ENCODE measurements at regions of chr3 and their contacts with region 1.

Region 1: DNA sequence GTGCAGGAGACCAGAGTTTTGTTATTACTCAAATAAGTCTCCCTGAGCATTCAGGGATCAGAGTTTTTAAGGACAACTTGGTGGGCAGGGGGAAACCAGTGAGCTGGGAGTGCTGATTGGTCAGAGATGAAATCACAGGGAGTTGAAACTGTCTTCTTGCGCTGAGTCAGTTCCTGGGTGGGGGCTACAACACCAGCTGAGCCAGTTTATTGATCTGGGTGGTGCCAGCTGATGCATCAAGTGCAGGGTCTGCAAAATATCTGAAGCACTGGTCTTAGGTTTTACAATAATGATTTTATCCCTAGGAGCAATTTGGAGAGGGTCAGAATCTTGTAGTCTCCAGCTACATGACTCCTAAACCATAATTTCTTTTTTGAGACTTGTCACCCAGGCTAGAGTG is 13.8 kb upstream of the ZNF662 start:
- DNase-seq: no peak
- H3K4me3 ChIP-seq: no peak overlapping the region
- H3K27me3 ChIP-seq: peaks cover 2% of the 10 kb centered on the region
- CTCF ChIP-seq: no peak

Region 2: DNA sequence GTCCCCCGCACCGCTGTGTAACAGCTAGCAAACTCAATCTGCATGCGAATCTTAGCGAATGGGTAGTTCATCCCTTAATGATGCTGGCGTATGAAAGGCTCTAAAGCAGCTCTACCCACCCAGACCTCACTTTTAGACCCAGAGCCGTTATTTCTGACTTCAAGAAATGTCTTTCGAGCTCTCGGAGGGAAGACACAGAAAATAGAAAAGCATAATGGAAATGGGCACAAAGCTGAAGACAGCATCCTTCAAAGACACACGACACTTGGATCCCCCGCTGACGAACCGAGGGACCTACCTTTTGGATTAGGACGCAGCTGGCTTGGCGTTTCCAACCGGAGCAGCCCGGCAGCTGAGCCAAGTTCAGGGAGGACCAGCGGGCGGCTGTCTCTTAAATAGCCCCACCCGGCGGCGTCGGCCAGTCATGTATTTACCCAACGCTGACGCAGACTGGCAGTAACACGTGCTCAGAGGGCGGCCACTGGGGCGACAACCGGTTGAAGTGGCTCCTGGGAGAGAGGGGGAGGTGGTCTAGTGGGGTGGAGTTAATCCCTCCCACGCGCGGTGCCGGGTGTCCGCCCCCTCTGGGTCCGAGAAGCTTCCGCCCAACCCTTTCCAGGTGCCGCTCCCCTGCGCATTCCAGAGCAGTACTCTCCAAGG is 627.6 kb before region 1 on chr3:
- CTCF ChIA-PET with region 1: no interaction called
- POLR2A ChIA-PET with region 1: no interaction called
- DNase-seq: no peak
- H3K4me3 ChIP-seq: no peak overlapping the region
- H3K27me3 ChIP-seq: peaks cover 28% of the 10 kb centered on the region
- CTCF ChIP-seq: no peak

Region 3: DNA sequence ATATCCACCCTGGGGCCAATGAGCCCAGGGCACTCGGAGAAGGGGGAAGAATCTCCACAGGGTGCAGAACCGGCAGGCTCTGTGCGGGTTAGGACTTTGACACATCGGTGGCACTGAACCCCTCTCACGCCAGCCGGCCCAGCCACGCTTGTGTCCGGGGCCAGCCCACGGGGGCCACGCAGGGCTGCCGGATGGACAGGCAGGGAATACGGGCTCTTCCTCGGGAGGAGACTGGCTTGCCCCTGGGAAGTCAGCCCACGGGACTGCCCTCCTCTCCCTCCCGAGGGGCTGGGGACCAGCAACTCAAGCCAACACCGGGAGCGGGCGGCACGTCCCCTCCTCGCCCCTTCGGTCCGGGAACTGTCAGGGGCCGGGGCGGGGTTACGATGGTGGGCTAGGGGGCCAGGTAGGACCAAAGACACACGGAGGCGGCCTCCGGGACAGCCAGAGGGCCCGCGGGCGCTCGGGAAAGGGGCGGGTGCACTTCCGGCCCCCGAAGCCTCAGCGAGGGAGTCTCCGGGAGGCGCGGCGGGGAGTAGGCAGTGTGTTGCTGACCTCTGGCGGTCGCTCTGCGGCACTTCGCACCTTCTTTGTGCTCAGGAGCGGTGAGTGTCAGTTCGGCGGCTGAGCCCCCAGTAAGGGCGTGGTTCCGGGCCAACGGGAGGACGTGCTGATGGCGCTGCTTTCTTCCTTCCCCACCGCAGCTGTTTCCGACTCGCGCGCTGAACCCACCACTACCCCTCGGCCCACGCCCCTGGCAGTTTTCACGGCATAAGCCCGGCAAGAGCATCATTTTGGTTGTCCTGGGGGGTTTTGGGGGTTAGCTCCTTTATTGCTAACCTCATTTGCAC is 11.3 kb before region 1 on chr3:
- CTCF ChIA-PET with region 1: interaction called, 14 read pairs
- POLR2A ChIA-PET with region 1: no interaction called
- DNase-seq: no peak
- H3K4me3 ChIP-seq: peak overlapping the region; percentile 66
- H3K27me3 ChIP-seq: peaks cover 4% of the 10 kb centered on the region; the same call in 1 of the 2 replicates
- CTCF ChIP-seq: peak; percentile 95

Region 4: GRCh38 chr3:42906070-42906847 is 14.1 kb after region 1 on chr3 and contains the start of gene ZNF662:
- CTCF ChIA-PET with region 1: no interaction called
- POLR2A ChIA-PET with region 1: no interaction called
- DNase-seq: no peak
- H3K4me3 ChIP-seq: peak within 1 kb of the TSS; percentile 47
- H3K27me3 ChIP-seq: peaks cover 1% of the 10 kb centered on the region; the same call in 1 of the 2 replicates
- CTCF ChIP-seq: no peak
- polyA plus RNA-seq, gene ZNF662: 1.2 and 2.1 TPM in 2 replicates

Region 5: GRCh38 chr3:43013743-43014155 is 121.6 kb after region 1 on chr3:
- CTCF ChIA-PET with region 1: no interaction called
- POLR2A ChIA-PET with region 1: no interaction called
- DNase-seq: no peak
- H3K4me3 ChIP-seq: no peak overlapping the region
- H3K27me3 ChIP-seq: no peaks in the 10 kb centered on the region
- CTCF ChIP-seq: no peak

Measured in BJ (cell line).